Vagina (tissue), 2 donors: ENCODE measurements at regions of chr10 and their contacts with region 1.

Region 1: GRCh38 chr10:97150013-97150595 is 35.7 kb downstream of the SLIT1 start:
- DNase-seq: no peak
- H3K4me3 ChIP-seq: no peak overlapping the region
- H3K27ac ChIP-seq: no peak overlapping the region
- H3K4me1 ChIP-seq: no peaks in the 10 kb centered on the region
- H3K27me3 ChIP-seq: no peaks in the 10 kb centered on the region
- CTCF ChIP-seq: no peak
- POLR2A ChIP-seq: no peak

Region 2: DNA sequence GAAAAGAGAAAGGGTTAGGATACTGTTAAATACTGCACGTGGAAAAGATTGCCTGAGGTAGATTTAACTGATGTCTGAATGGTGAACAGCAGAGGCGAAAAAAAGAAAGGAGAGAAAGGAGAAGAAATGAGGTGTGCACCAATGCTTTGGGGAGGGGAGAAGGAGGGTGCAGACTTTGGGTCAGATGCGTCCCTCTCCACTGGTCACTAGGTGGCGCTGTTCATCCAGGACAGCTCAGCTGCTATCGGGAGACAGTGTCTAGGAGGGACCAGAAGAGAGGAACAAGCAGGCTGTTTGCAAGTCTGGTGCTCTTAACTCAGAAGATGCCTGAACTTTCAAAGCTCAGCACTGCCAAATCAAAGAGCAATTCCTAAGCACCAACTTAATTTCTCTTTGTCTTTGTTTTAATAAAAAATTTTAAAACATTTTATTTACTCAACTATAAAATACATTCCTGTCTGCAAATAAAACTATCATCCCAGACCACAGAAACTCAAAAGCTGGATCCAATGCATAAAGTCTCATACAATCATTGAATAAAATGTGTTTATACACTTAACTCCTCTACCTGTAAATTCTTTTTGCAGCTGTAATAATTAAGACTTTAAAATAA is 1775.4 kb before region 1 on chr10:
- intact Hi-C with region 1: loop called (anchors 5 kb)
- DNase-seq: no peak
- H3K4me3 ChIP-seq: no peak overlapping the region
- H3K27ac ChIP-seq: no peak overlapping the region
- H3K4me1 ChIP-seq: peaks cover 5% of the 10 kb centered on the region
- H3K27me3 ChIP-seq: no peaks in the 10 kb centered on the region
- CTCF ChIP-seq: peak; percentile 70 to 95 (median 82)
- POLR2A ChIP-seq: no peak

Region 3: GRCh38 chr10:96743988-96744585 is 406.0 kb before region 1 on chr10:
- intact Hi-C with region 1: no loop called
- DNase-seq: no peak
- H3K4me3 ChIP-seq: no peak overlapping the region
- H3K27ac ChIP-seq: no peak overlapping the region
- H3K4me1 ChIP-seq: no peaks in the 10 kb centered on the region
- H3K27me3 ChIP-seq: no peaks in the 10 kb centered on the region
- CTCF ChIP-seq: no peak
- POLR2A ChIP-seq: no peak

Region 4: DNA sequence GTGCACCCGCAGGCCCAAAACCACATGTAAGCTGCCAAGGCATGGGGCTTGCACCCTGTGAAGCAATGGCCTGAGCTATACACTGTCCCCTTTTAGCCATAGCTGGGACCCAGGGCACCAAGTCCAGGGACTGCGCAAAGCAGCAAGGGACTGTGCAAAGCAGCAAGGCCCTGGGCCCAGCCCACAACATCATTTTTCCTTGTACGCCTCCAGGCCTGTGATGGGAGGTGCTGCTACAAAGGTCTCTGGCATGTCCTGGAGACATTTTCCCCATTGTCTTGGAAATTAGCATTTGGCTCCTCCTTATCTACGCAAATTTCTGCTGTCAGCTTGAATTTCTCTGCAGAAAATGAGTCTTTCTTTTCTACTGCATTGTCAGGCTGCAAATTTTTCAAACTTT is 117.6 kb after region 1 on chr10:
- intact Hi-C with region 1: no loop called
- DNase-seq: no peak
- H3K4me3 ChIP-seq: no peak overlapping the region
- H3K27ac ChIP-seq: no peak overlapping the region
- H3K4me1 ChIP-seq: no peaks in the 10 kb centered on the region
- H3K27me3 ChIP-seq: no peaks in the 10 kb centered on the region
- CTCF ChIP-seq: no peak
- POLR2A ChIP-seq: no peak